Transverse colon (tissue), 4 donors: ENCODE measurements at regions of chr22 and their contacts with region 1.

Region 1: DNA sequence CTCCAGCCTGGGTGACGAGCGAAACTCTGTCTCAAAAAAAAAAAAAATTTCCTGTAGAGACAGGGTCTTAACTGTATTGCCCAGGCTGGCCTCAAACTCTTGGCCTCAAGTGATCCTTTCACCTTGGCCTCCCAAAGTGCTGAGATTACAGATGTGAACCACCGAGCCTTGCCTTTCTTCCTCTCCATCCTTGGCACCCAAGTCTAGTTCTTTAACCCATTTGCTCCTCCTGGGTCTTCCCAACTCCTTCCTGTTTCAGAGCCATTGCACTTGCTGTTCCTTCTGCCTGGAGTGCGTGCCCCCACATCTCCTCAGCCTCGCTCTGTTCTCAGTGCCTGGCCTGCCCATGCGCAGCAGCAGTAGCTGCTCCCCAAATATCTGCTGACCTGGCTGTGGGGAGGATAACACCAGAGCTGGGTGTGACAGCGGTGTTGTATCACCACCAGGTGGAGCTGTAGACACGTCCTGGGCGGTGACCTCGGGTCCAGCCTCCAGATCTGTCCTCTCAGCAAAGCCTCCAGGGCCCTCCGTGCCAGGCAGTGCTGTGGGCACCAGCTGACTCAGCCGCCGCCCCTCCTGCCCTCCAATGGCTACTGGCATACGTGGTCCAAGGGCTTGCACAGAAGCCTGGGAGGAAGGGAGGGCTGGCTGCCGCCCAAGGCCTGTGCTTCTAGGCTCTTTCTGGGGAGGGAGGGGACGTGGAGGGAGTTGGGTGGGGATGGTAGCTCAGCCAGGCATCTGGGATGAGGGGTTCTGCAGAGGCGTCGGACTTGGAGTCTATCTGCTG is 22.0 kb downstream of the TEF start:
- DNase-seq: peak; percentile 89
- H3K4me3 ChIP-seq: no peak overlapping the region
- H3K27ac ChIP-seq: peak overlapping the region; percentile 6 to 57 (median 36)
- H3K4me1 ChIP-seq: peaks cover 15 to 23% (median 18%) of the 10 kb centered on the region in 4 donors
- H3K27me3 ChIP-seq: no peaks in the 10 kb centered on the region
- CTCF ChIP-seq: peak; percentile 95 to 98 (median 96)
- EP300 ChIP-seq: peak; percentile 29
- POLR2A ChIP-seq: no peak

Region 2: GRCh38 chr22:41517172-41518047 is 113.7 kb after region 1 on chr22:
- in situ Hi-C with region 1: loop called in 3 of 4 experiments (anchors 5 to 10 kb)
- intact Hi-C with region 1: loop called (anchors 5 kb)
- DNase-seq: peak; percentile 81
- H3K4me3 ChIP-seq: no peak overlapping the region
- H3K27ac ChIP-seq: peak overlapping the region in 3 of 4 donors; percentile 23 to 41 (median 33)
- H3K4me1 ChIP-seq: peaks cover 0 to 16% (median 0%) of the 10 kb centered on the region in 4 donors
- H3K27me3 ChIP-seq: no peaks in the 10 kb centered on the region
- CTCF ChIP-seq: peak; percentile 89 to 92 (median 90)
- EP300 ChIP-seq: no peak
- POLR2A ChIP-seq: no peak

Region 3: GRCh38 chr22:41526837-41527799 is 123.4 kb after region 1 on chr22:
- in situ Hi-C with region 1: loop called in 1 of 4 experiments (anchors 5 kb)
- intact Hi-C with region 1: no loop called
- DNase-seq: peak; percentile 55
- H3K4me3 ChIP-seq: no peak overlapping the region
- H3K27ac ChIP-seq: peak overlapping the region; percentile 75 to 86 (median 80)
- H3K4me1 ChIP-seq: peaks cover 17 to 25% (median 22%) of the 10 kb centered on the region in 4 donors
- H3K27me3 ChIP-seq: no peaks in the 10 kb centered on the region
- CTCF ChIP-seq: peak; percentile 78 to 89 (median 83)
- EP300 ChIP-seq: no peak
- POLR2A ChIP-seq: no peak